ENCODE measurements at regions of chr20 and their contacts with region 1.

Region 1: GRCh38 chr20:35994994-35995453 is 26.6 kb downstream of the CNBD2 start:
- DNase-seq: peak; percentile 90
- ATAC-seq: peak; percentile 97

Region 2: GRCh38 chr20:36035745-36036144 is 40.7 kb after region 1 on chr20:
- intact Hi-C with region 1: no loop called
- DNase-seq: no peak
- ATAC-seq: no peak

Region 3: GRCh38 chr20:36144336-36144735 is 149.3 kb after region 1 on chr20:
- intact Hi-C with region 1: loop called (anchors 2 kb)
- DNase-seq: no peak
- ATAC-seq: no peak